GM10248 (cell line): ENCODE measurements at regions of chr17 and their contacts with region 1.

Region 1: GRCh38 chr17:46056800-46057304 is 57.8 kb downstream of the STH start:
- DNase-seq: no peak
- CTCF ChIP-seq: no peak

Region 2: DNA sequence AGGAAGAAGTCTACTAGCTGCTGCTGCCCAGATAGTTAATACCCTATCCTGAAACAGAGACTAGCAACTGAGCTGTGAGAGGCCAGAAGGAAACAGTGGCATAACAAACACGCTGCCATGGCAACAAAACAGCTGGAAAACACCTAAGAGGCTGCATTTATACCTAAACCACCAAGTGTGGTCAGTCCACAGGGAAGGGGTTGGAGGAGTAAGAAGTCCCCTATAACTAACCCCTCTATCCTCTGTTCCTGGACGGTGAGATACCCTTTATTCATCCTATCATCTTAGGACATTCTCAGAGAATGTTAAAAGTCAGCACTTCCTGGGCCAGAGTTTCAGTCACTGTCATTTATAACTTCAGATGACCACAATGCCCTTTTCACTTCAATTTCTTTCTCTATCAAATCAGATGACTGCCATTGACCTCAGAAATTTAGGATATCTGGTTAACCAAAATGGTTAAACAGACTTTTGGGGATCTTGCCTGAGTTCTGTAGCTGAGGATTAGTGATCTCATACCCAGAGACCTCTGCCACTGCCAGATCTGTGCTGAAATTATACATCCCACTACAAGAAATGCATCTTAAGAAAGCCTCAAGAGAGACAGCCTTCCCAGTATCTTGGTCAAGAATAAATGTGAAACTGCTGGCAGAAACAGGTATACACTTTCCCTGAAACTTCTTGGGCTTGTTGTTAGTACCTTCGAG is 21.6 kb before region 1 on chr17:
- CTCF ChIA-PET with region 1: interaction called, 15 read pairs
- POLR2A ChIA-PET with region 1: no interaction called
- DNase-seq: no peak
- CTCF ChIP-seq: no peak

Region 3: DNA sequence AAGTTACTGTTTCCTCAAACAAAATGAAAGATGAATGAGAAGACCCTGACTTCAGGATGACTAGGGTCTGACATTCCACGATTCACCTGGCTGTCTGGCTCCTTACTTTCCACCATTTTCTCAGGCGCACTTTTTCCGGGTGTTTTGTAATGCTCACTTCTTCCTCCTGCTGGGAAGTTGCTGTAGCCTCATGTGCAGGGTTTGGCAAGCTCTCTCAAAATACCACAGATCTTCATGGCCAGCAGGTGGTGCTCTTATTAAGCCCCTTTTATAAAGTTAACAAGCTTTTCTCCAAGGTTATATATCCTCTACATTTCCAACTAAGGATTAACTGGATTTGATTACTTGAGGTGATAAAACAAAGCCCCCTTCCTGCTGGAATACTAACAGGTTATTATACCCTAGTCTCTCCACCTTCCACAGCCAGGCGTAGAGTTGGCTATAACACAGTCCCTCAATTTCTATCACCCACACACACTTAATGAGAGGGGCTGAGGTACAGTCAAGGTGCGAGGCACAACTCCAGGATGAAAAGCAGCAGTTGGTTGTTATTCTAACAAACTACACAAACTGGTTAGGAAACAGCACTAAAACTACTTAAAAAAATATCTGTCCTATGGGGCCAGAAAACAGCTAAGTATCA is 12.4 kb before region 1 on chr17:
- CTCF ChIA-PET with region 1: interaction called, 28 read pairs
- POLR2A ChIA-PET with region 1: no interaction called
- DNase-seq: no peak
- CTCF ChIP-seq: peak; percentile 66